ENCODE measurements at regions of chr2 and their contacts with region 1.

Region 1: DNA sequence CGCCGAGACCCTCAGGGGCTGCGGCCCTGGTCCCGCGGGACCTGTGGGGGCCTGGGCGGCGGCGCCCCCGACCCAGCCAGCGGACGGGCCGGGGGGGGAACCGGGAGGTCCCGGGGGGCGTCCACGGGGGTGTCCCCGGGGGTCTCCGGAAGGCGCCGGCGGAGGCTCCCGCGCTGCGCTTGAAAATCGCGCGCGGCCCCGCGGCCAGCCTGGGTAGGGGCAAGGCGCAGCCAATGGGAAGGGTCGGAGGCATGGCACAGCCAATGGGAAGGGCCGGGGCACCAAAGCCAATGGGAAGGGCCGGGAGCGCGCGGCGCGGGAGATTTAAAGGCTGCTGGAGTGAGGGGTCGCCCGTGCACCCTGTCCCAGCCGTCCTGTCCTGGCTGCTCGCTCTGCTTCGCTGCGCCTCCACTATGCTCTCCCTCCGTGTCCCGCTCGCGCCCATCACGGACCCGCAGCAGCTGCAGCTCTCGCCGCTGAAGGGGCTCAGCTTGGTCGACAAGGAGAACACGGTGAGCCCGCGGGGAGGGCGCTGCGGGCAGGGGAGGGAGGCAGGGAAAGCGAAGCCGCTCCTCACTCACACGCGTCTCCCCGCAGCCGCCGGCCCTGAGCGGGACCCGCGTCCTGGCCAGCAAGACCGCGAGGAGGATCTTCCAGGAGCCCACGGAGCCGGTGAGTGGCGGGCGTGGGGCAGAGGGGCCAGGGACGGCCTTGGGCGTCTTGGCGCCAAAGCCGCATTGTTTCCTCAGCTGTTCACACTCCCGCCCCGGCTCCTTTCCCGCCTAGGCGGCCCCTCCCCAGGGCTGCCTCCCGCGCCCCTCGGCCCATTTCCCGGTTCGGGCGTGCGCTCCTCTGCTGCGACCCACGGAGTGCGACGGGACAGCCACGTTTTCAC is at the start of gene RRM2:
- DNase-seq: peak; percentile 74 to 94 (median 84)
- ATAC-seq: peak; percentile 82
- H3K4me3 ChIP-seq: peak within 1 kb of the TSS; percentile 55
- H3K4me3 Mint-ChIP-seq: peak within 1 kb of the TSS; percentile 80 to 99 (median 98)
- H3K27ac ChIP-seq: peak within 1 kb of the TSS; percentile 34
- H3K27ac Mint-ChIP-seq: peak within 1 kb of the TSS in 6 of 9 donors; percentile 17 to 99 (median 69)
- H3K4me1 ChIP-seq: peaks cover 24 to 29% of the 10 kb centered on the region in 2 donors
- H3K4me1 Mint-ChIP-seq: peaks cover 21 to 76% (median 41%) of the 10 kb centered on the region in 7 donors
- H3K27me3 ChIP-seq: peaks cover 0 to 7% of the 10 kb centered on the region in 2 donors
- H3K27me3 Mint-ChIP-seq: peaks cover 0 to 24% (median 10%) of the 10 kb centered on the region in 5 donors
- total RNA-seq, gene RRM2: 0.13 to 330 (median 0.51) TPM

Region 2: GRCh38 chr2:9191041-9191481 is 931.6 kb before region 1 on chr2:
- CTCF ChIA-PET with region 1: no interaction called
- POLR2A ChIA-PET with region 1: no interaction called
- intact Hi-C with region 1: no loop called
- DNase-seq: no peak
- ATAC-seq: no peak
- H3K4me3 ChIP-seq: no peak overlapping the region
- H3K4me3 Mint-ChIP-seq: no peak overlapping the region
- H3K27ac ChIP-seq: no peak overlapping the region
- H3K27ac Mint-ChIP-seq: no peak overlapping the region
- H3K4me1 ChIP-seq: no peaks in the 10 kb centered on the region
- H3K4me1 Mint-ChIP-seq: no peaks in the 10 kb centered on the region
- H3K27me3 ChIP-seq: no peaks in the 10 kb centered on the region
- H3K27me3 Mint-ChIP-seq: peaks cover 0 to 6% (median 3%) of the 10 kb centered on the region in 5 donors

Region 3: DNA sequence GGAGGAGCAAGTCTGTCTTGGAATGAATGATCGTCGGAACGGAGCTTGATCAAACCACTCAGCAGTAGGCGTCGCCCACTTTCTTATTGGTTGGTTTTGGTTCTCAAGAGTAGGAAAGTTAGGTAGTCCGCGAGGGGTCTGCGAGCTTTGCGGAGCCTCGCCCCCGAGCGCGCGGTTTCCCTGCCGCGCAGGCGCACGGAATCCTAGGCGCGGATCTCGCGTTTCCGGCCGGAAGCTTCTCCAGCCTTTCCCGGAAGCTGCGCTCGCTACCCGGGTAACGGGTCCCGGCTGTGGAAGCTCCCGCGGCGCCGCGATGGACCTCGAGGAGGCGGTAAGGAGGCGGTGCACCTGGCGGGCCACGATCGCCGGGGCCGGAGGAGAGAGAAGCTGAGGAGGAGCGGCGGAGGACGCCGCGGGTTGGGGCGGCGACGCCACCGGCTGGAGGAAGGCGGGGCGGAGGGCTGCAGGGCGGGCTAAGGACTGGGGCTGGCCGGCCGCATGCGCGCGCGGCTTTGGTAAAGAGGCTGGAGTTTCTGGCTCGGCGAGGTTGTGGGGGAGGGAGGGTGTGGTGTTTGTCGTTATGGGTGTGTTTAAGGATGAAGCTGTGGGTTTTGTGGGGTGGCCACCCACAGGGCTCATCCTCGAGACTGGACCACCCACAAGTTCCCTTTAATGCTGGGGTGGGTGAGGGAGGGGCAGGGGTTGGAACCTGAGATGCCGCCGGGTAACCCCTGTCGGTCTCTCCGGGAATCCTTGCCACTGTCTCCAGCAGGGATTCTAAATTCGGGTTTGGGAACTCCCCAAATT is 279.2 kb before region 1 on chr2 and contains the start of gene TAF1B:
- CTCF ChIA-PET with region 1: no interaction called
- POLR2A ChIA-PET with region 1: no interaction called
- intact Hi-C with region 1: loop called (anchors 1 to 5 kb)
- DNase-seq: peak; percentile 55 to 89 (median 80)
- ATAC-seq: peak; percentile 87
- H3K4me3 ChIP-seq: peak within 1 kb of the TSS; percentile 85
- H3K4me3 Mint-ChIP-seq: peak within 1 kb of the TSS; percentile 89 to 95 (median 93)
- H3K27ac ChIP-seq: peak within 1 kb of the TSS; percentile 72
- H3K27ac Mint-ChIP-seq: peak within 1 kb of the TSS; percentile 74 to 97 (median 92)
- H3K4me1 ChIP-seq: peaks cover 11 to 13% of the 10 kb centered on the region in 2 donors
- H3K4me1 Mint-ChIP-seq: peaks cover 25 to 56% (median 48%) of the 10 kb centered on the region in 7 donors
- H3K27me3 ChIP-seq: no peaks in the 10 kb centered on the region
- H3K27me3 Mint-ChIP-seq: peaks cover 0 to 6% (median 0%) of the 10 kb centered on the region in 5 donors
- total RNA-seq, gene TAF1B: 9.2 to 28.2 (median 20.9) TPM

Region 4: GRCh38 chr2:10072656-10073480 is 49.8 kb before region 1 on chr2:
- CTCF ChIA-PET with region 1: interaction called, 3 read pairs
- POLR2A ChIA-PET with region 1: no interaction called
- intact Hi-C with region 1: loop called (anchors 1 to 2 kb)
- DNase-seq: peak; percentile 54 to 82 (median 77)
- ATAC-seq: peak; percentile 97
- H3K4me3 ChIP-seq: no peak overlapping the region
- H3K4me3 Mint-ChIP-seq: peak overlapping the region in 1 of 10 donors; percentile 0
- H3K27ac ChIP-seq: no peak overlapping the region
- H3K27ac Mint-ChIP-seq: no peak overlapping the region
- H3K4me1 ChIP-seq: no peaks in the 10 kb centered on the region
- H3K4me1 Mint-ChIP-seq: peaks cover 0 to 6% (median 3%) of the 10 kb centered on the region in 7 donors
- H3K27me3 ChIP-seq: peaks cover 0 to 3% of the 10 kb centered on the region in 2 donors
- H3K27me3 Mint-ChIP-seq: peaks cover 43 to 53% (median 50%) of the 10 kb centered on the region in 5 donors

Region 5: DNA sequence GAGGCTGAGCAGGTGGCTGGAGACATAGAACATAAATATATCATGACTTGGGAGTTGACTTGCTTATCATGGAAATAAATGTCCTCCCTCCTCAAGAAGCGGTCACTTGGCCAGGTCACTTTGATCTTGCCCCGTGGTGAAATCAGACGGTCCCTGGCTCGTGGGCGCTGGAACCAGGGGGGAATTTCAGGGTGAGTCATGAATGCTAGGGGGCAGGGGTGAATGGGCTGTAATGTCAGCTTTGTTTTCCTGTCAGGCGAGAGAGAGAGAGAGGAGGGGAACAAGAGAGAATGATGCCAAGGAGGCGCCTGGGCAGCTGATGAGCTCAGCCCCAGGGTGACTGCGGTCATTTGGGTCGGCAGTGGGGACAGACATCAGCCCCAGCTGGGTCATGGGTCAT is 47.6 kb after region 1 on chr2:
- CTCF ChIA-PET with region 1: no interaction called
- POLR2A ChIA-PET with region 1: no interaction called
- intact Hi-C with region 1: no loop called
- DNase-seq: no peak
- ATAC-seq: no peak
- H3K4me3 ChIP-seq: no peak overlapping the region
- H3K4me3 Mint-ChIP-seq: no peak overlapping the region
- H3K27ac ChIP-seq: no peak overlapping the region
- H3K27ac Mint-ChIP-seq: peak overlapping the region in 1 of 9 donors; percentile 29
- H3K4me1 ChIP-seq: no peaks in the 10 kb centered on the region
- H3K4me1 Mint-ChIP-seq: peaks cover 0 to 1% (median 0%) of the 10 kb centered on the region in 7 donors
- H3K27me3 ChIP-seq: no peaks in the 10 kb centered on the region
- H3K27me3 Mint-ChIP-seq: no peaks in the 10 kb centered on the region

Region 6: GRCh38 chr2:10267551-10268465 is 145.2 kb after region 1 on chr2:
- CTCF ChIA-PET with region 1: no interaction called
- POLR2A ChIA-PET with region 1: no interaction called
- intact Hi-C with region 1: loop called in 1 of 2 experiments (anchors 1 kb)
- DNase-seq: no peak
- ATAC-seq: no peak
- H3K4me3 ChIP-seq: no peak overlapping the region
- H3K4me3 Mint-ChIP-seq: no peak overlapping the region
- H3K27ac ChIP-seq: no peak overlapping the region
- H3K27ac Mint-ChIP-seq: no peak overlapping the region
- H3K4me1 ChIP-seq: peaks cover 0 to 8% of the 10 kb centered on the region in 2 donors
- H3K4me1 Mint-ChIP-seq: peaks cover 5 to 13% (median 11%) of the 10 kb centered on the region in 7 donors
- H3K27me3 ChIP-seq: no peaks in the 10 kb centered on the region
- H3K27me3 Mint-ChIP-seq: no peaks in the 10 kb centered on the region

Region 7: GRCh38 chr2:10434886-10435819 is 312.5 kb after region 1 on chr2:
- CTCF ChIA-PET with region 1: interaction called, 45 read pairs
- POLR2A ChIA-PET with region 1: interaction called, 5 read pairs
- intact Hi-C with region 1: loop called (anchors 1 kb)
- DNase-seq: peak; percentile 31 to 84 (median 64)
- ATAC-seq: peak; percentile 74
- H3K4me3 ChIP-seq: no peak overlapping the region
- H3K4me3 Mint-ChIP-seq: peak overlapping the region in 1 of 10 donors; percentile 27
- H3K27ac ChIP-seq: no peak overlapping the region
- H3K27ac Mint-ChIP-seq: peak overlapping the region in 2 of 9 donors; percentile 14 to 72
- H3K4me1 ChIP-seq: peaks cover 0 to 5% of the 10 kb centered on the region in 2 donors
- H3K4me1 Mint-ChIP-seq: peaks cover 0 to 20% (median 12%) of the 10 kb centered on the region in 7 donors
- H3K27me3 ChIP-seq: peaks cover 0 to 2% of the 10 kb centered on the region in 2 donors
- H3K27me3 Mint-ChIP-seq: peaks cover 0 to 6% (median 2%) of the 10 kb centered on the region in 5 donors

Region 8: DNA sequence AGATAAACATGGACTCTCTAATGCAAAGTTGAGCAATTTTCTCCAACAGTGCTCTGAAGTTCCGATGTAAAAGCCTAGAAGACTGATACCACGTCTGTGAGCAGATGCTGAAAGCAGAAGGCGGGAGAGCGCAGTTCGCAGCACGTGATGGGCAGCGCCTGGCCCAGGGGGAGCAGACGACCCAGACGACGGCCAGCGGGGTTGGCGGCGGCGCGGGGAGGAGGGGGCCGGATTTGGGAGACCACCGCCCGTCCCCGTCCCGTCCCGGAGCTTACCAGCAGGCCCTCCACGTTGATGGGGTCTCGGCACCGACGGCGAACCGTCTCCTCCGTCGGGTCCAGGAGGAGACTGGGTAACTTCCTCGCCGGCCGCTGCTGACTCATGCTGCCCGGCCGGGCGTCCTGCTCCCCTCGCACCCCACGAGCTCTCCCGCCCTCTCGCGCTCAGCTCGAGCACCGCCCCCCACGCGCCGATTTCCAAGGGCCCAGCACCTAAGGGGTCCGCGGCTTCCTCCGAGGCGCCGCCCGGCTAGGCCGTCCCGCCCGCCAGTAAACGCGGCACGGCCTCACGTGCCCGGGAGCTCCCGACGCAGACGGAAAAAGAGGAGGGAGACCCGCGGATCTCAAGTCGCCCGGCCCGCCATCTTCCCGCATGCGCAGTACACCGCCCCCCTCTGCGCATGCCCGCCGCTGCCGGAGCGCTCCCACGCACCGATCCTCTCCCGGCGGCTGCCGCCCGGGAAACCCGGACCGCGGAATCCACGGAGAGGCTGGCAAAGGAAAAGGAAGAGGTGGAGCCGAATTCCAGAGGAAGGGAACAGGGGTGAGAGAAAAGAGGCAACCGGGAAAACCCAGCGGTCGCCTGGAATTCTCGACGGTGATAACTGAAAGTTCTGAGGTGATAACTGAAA is 1343.1 kb after region 1 on chr2 and contains the start of gene E2F6:
- CTCF ChIA-PET with region 1: no interaction called
- POLR2A ChIA-PET with region 1: no interaction called
- intact Hi-C with region 1: loop called in 1 of 2 experiments (anchors 5 kb)
- DNase-seq: peak; percentile 80 to 94 (median 87)
- ATAC-seq: peak; percentile 83
- H3K4me3 ChIP-seq: peak within 1 kb of the TSS; percentile 69
- H3K4me3 Mint-ChIP-seq: peak within 1 kb of the TSS; percentile 91 to 99 (median 98)
- H3K27ac ChIP-seq: peak within 1 kb of the TSS; percentile 73
- H3K27ac Mint-ChIP-seq: peak within 1 kb of the TSS; percentile 87 to 97 (median 93)
- H3K4me1 ChIP-seq: peaks cover 5 to 8% of the 10 kb centered on the region in 2 donors
- H3K4me1 Mint-ChIP-seq: peaks cover 27 to 49% (median 39%) of the 10 kb centered on the region in 7 donors
- H3K27me3 ChIP-seq: no peaks in the 10 kb centered on the region
- H3K27me3 Mint-ChIP-seq: peaks cover 0 to 2% (median 0%) of the 10 kb centered on the region in 5 donors
- total RNA-seq, gene E2F6: 6.2 to 11.6 (median 9.2) TPM

Measured in naive thymus-derived CD4-positive, alpha-beta T cell (primary cell).